HEK293 (cell line): ENCODE measurements at regions of chr15 and their contacts with region 1.

Region 1: GRCh38 chr15:70826634-70827033 is 27.3 kb downstream of the LARP6 start:
- H3K4me3 ChIP-seq: no peak overlapping the region
- H3K27ac ChIP-seq: no peak overlapping the region; the same call in 1 of the 2 replicates
- H3K4me1 ChIP-seq: peaks cover 4% of the 10 kb centered on the region; the same call in 1 of the 2 replicates
- CTCF ChIP-seq: no peak

Region 2: DNA sequence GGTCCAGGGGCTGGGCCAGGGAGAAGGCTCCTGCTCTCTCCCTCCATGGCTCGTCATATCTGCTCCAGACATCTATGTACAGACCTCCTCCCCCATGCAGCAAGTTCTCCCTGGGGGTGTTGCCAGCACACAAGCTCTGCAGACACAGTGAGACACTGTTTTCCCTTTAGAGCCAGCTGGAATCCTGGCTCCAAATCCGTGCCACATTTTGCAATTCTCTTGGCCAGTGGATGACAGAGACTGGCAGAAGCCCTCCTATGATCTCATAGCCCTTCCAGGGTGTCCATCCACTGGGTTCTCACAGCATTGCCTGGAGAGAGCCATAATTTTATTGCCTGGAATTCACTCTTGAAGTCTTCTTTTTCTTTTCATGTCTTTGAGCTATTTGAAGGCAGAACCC is 932.8 kb before region 1 on chr15:
- CTCF ChIA-PET with region 1: interaction called, 10 read pairs
- POLR2A ChIA-PET with region 1: no interaction called
- H3K4me3 ChIP-seq: no peak overlapping the region
- H3K27ac ChIP-seq: no peak overlapping the region
- H3K4me1 ChIP-seq: peaks cover 16% of the 10 kb centered on the region; the same call in 1 of the 2 replicates
- CTCF ChIP-seq: no peak

Region 3: GRCh38 chr15:70792171-70792573 is 34.5 kb before region 1 on chr15:
- CTCF ChIA-PET with region 1: interaction called, 10 read pairs
- POLR2A ChIA-PET with region 1: no interaction called
- H3K4me3 ChIP-seq: no peak overlapping the region
- H3K27ac ChIP-seq: no peak overlapping the region
- H3K4me1 ChIP-seq: peaks cover 4% of the 10 kb centered on the region; the same call in 1 of the 2 replicates
- CTCF ChIP-seq: no peak

Region 4: GRCh38 chr15:70853821-70854666 is 27.4 kb after region 1 on chr15 and contains the start of gene LARP6:
- CTCF ChIA-PET with region 1: interaction called, 10 read pairs
- POLR2A ChIA-PET with region 1: interaction called, 3 read pairs
- H3K4me3 ChIP-seq: peak within 1 kb of the TSS; percentile 76
- H3K27ac ChIP-seq: peak within 1 kb of the TSS; percentile 93
- H3K4me1 ChIP-seq: peaks cover 9% of the 10 kb centered on the region
- CTCF ChIP-seq: no peak

Region 5: DNA sequence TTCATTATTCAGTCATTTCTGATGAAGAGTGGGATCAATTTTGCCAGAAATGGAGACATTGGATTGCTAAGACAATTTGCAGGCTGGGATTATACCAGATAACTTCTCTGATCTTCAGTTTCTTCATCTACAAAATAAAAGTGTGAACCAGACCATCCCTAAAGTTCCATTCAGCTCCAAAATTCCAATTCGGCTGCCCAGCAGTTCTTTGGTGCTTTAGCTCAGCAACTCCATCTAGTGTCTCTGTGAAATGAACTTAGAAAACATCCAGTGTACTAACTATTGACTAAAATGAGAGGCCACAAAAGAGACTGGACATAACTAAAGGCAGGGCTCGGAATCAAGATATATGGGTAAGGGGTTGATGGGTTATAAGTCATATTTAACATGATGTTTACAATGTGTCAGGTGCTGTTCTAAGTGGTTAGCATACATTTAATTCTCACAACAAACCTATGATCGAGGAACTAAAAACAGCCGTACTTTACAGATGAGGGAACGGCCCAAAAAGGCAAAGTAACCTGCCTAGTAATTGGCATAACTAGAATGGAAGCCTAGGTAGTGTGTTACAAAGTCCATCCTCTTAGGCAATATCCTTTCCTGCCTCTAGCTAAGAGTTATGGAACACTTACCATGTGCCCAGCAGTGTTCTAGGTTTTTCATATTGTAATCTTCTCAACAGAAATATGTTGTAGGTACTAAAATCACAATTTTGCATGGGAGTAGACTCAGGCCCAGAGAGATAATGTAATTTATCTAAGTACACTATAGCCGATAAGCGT is 48.6 kb after region 1 on chr15:
- CTCF ChIA-PET with region 1: interaction called, 70 read pairs
- POLR2A ChIA-PET with region 1: interaction called, 3 read pairs
- H3K4me3 ChIP-seq: no peak overlapping the region
- H3K27ac ChIP-seq: no peak overlapping the region
- H3K4me1 ChIP-seq: no peaks in the 10 kb centered on the region
- CTCF ChIP-seq: peak; percentile 72